ENCODE measurements at regions of chr9 and their contacts with region 1.

Region 1: GRCh38 chr9:125241000-125241862 is at the start of gene HSPA5:
- DNase-seq: peak; percentile 99 to 100
- ATAC-seq: peak; percentile 97 to 99 (median 98)
- H3K4me3 ChIP-seq: peak within 1 kb of the TSS; percentile 79 to 99 (median 86)
- H3K27ac ChIP-seq: peak within 1 kb of the TSS; percentile 78 to 98 (median 96)
- H3K4me1 ChIP-seq: peaks cover 22 to 55% (median 47%) of the 10 kb centered on the region in 9 donors
- H3K27me3 ChIP-seq: no peaks in the 10 kb centered on the region
- CTCF ChIP-seq: peak in 5 of 9 donors; percentile 19 to 50 (median 31)
- total RNA-seq, gene HSPA5: 184 to 329 (median 234) TPM

Region 2: DNA sequence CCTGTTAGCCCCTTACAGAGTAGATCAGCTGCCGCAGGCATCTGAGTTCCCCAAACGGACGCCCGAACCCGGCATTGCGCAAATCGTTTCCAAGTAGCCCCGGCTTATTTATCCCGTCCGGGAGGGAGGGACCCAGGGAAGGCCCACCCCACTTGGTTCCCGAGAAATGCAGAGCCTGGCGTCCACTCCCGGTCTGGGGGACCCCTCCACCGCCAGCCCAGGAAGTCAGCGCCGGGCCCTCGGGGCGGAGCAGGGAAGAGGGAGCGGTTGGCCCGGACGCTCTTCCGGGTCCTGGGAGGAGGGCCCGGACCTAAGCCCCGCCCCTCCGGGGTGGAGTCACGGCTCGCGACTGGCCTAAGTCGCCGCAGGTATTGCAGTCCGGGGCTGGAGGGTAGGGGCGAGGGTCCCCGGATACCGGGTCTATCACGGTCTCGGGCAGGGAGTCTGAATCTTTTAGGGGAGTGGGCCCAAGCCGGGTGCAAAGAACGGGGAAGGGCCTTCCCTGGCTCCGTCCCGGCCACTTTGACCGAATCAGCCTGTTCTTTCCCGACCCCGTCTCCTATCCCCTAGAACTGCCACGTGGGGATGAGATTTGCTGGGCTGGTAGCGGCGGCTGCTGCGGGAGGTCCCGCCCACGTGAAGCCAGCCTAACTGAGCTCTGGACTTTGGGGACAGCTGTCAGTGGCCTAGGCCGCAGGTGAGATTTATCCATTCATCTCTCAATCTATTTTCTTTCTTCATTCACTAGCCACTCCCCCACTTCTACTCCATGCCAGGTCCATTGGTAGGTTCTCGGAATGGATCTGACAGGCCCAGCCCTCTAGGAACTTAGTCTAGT is 40.8 kb before region 1 on chr9 and contains the start of gene RABEPK:
- intact Hi-C with region 1: loop called in 2 of 10 experiments (anchors 2 to 5 kb)
- DNase-seq: peak; percentile 93 to 94
- ATAC-seq: peak; percentile 99 to 100 (median 100)
- H3K4me3 ChIP-seq: peak within 1 kb of the TSS; percentile 47 to 89 (median 72)
- H3K27ac ChIP-seq: peak within 1 kb of the TSS; percentile 36 to 96 (median 87)
- H3K4me1 ChIP-seq: peaks cover 0 to 14% (median 7%) of the 10 kb centered on the region in 9 donors
- H3K27me3 ChIP-seq: no peaks in the 10 kb centered on the region
- CTCF ChIP-seq: no peak
- total RNA-seq, gene RABEPK: 6.5 to 12.7 (median 10.2) TPM

Region 3: DNA sequence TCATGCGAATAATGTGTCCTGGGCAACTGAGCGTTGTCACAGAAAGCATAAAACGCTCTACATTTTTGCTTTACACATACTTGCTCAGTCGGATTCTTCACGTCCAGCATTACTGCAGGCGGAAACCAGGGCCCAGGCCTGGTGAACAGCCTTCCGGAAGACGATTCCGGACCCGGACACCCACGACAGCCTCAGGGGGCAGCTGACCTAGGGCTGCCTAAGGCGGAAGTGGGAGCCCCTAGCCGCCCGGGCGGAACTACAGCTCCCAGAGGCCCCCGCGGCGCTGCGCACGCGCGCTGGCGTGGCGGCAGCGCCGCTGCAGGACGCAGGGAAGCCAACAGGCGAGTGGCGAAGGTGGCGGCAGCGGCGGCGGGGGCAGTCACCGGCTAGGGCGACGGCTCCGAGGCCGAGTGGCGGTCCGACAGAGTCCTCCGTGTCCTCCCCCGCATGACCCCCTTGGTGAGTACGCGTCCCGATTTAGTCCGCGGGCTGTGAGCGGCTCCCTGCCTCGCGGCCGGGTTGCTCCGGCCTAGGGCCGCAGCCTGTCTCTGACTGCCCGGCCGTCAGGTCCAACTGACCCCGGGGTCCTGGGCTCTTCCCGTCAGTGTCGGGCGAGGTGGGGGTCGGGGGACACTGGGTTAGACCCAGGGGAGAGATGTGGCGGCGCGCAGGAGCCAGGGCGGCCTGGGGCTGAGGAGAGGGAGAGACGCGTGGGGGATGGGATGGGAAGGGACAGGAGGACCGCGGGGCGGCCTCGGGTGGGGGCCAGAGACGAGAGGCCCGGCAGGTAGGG is 20.5 kb after region 1 on chr9 and contains the start of gene GAPVD1:
- intact Hi-C with region 1: loop called in 2 of 10 experiments (anchors 1 kb)
- DNase-seq: peak; percentile 85 to 93
- ATAC-seq: peak; percentile 99 to 100 (median 99)
- H3K4me3 ChIP-seq: peak within 1 kb of the TSS; percentile 68 to 99 (median 94)
- H3K27ac ChIP-seq: peak within 1 kb of the TSS in 9 of 10 donors; percentile 73 to 95 (median 85)
- H3K4me1 ChIP-seq: peaks cover 0 to 59% (median 26%) of the 10 kb centered on the region in 9 donors
- H3K27me3 ChIP-seq: no peaks in the 10 kb centered on the region
- CTCF ChIP-seq: peak in 8 of 9 donors; percentile 11 to 66 (median 50)
- total RNA-seq, gene GAPVD1: 27.0 to 40.0 (median 35.0) TPM

Region 4: DNA sequence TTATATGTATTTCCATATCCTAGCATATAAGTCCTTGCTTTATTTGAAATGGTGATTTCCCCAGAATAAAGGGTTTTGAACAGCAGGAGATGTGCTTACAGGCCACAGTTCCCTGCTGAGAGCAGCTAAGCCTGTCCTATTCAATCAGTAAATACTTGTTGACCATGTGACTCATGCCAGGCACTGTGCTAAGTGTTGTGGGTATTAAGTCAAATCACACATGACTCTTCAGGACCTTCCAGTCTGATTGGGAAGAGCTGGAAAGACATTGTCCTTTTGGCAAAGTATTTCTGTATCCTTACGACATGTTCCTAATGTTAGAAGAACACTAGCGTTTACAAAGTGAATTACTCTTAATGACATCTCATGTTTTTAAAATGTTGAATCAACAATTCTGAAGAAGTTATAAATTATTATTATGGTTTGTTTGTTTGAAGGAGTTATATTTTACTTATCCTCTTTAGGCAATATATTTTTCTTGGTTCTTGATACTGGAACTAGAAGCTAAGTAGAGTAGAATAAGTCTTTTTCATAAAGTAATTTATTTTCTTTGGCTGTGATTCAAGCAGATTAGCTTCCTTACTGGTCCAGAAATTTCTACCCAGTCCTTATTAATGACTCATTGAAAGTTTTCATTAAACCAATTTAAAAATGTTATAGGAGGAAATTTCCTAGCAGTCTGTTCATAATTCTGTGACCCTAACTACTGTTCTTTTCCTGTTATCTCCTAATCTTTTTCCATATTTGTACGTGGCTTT is 102.5 kb after region 1 on chr9:
- intact Hi-C with region 1: loop called in 1 of 10 experiments (anchors 10 kb)
- DNase-seq: peak in 1 of 2 donors; percentile 9
- ATAC-seq: peak; percentile 53 to 97 (median 77)
- H3K4me3 ChIP-seq: no peak overlapping the region
- H3K27ac ChIP-seq: peak overlapping the region in 5 of 10 donors; percentile 2 to 20 (median 10)
- H3K4me1 ChIP-seq: peaks cover 0 to 16% (median 11%) of the 10 kb centered on the region in 9 donors
- H3K27me3 ChIP-seq: no peaks in the 10 kb centered on the region
- CTCF ChIP-seq: peak in 1 of 9 donors; percentile 7

Region 5: DNA sequence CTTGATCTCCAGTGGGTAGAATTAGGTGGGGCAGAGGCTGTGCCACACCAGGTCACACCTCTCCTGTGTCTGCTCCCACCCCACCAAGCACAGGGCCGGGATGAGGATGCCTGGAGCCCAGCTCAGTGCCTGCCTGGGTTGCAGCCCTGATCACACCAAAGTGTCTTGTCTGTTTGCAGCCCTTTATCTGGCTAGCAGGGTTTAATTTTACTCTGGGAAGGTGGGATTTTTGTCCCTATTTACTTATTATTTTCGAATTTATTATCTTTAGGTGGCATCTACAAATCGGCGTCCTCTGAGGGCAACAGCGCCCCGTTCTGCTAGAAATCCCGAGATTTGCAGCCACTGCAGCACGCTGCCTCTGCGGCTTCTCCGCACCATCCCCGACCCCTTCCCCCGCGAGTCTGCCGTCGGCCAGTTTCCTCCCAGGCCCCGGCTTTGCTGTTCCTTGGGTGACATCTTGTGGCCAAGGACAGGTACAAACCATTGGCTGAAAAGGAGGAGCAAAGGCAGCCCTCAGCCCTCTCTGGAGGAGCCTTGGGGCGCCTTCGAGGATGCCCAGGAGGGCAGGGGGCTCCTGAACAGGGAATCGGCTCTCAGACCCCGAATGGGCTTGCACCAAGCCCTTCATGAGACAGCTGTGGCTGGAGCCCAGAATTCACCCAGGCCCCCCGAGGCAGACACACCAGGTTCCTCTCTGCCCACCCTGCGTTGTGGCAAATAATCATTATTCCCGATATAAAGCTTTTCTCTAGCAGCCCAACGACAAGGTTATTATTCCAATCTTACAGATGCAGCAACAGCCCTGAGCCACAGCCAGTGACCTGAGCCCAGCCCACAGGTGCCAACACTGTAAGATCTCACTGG is 133.4 kb after region 1 on chr9:
- intact Hi-C with region 1: loop called in 1 of 10 experiments (anchors 10 kb)
- DNase-seq: peak; percentile 63
- ATAC-seq: peak; percentile 80 to 91 (median 86)
- H3K4me3 ChIP-seq: peak overlapping the region in 7 of 10 donors; percentile 27 to 52 (median 40)
- H3K27ac ChIP-seq: no peak overlapping the region
- H3K4me1 ChIP-seq: peaks cover 0 to 15% (median 4%) of the 10 kb centered on the region in 9 donors
- H3K27me3 ChIP-seq: peaks cover 0 to 6% (median 3%) of the 10 kb centered on the region in 7 donors
- CTCF ChIP-seq: peak; percentile 48 to 83 (median 78)